Ascending aorta (tissue), 2 donors: ENCODE measurements at regions of chr2 and their contacts with region 1.

Region 1: DNA sequence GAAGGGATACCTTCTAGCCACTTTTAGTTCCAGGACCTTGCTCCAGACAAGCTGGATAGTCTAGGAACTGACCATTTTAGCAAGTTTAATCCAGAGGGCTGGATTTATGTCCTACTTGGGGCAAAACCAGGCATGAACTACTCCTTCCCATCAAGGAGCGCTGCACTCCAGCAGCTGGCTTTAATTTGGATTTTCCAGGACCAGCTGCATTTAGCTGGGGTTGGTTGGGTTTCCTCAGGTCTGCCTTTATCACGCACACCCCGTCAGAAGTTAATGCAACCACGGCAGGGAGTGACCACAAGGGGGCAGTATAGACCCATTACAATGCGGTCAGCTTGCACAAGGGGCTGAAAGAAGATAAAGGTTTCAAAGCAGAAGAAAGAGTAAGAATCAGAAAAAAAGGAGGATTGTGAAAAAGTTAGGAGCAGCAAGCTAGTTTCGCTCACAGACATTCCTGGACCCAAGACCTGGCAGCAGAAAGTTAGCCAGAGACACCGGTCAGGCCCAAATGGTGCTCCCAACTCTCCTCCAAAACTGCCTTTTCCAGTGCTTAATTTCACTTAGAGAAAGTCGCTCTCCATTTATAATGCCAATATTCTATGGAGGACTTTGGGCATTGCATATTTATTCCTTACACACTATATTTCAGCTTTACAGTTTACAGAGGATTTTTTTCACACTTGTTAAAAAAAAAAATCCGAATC is 40.1 kb downstream of the SLC4A1AP start:
- DNase-seq: peak; percentile 61 to 95
- H3K4me3 ChIP-seq: no peak overlapping the region
- H3K27ac ChIP-seq: peak overlapping the region; percentile 95 to 97
- H3K4me1 ChIP-seq: peaks cover 28 to 30% of the 10 kb centered on the region in 2 donors
- H3K27me3 ChIP-seq: no peaks in the 10 kb centered on the region
- CTCF ChIP-seq: peak; percentile 85 to 95 (median 90)

Region 2: DNA sequence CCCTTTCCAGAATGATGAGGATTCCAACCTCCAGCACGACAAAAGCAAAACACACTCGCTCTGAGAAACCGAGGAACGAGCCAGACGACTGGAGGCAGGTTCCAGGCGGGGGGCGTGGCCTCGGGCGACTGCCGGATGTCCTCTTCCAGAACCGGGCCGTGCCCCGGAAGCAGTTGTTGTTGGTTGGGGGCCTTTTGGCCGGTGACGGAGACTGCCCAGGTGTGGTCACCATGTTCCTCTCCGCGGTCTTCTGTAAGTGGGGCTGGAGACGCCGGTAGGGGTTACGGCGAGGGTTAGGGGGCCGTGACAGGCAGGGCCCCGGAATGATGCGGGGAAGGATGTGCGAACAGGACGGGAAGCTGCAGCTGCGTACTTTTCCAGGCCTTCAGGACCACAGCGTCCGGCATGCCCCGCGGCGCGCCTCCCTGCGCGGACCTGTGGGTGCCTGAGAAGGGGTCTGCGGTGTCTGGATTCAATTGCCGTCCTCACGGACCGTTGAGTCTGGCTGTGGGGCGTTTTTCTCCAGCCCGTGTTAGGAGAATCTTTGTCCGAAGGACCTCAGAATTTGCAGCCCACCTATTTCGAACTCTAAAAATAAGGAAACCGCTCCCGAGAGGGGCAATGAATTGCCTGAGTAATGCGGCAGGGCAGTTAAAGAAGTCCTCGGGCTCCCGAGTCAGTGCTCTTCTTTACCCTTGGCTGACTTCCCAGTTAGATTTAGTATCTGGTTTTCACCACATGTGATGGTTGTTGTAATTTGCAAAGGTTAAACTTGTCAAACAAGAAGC is 68.0 kb after region 1 on chr2 and contains the start of gene MRPL33:
- intact Hi-C with region 1: loop called (anchors 1 kb)
- DNase-seq: peak; percentile 83 to 97
- H3K4me3 ChIP-seq: peak within 1 kb of the TSS; percentile 80 to 92
- H3K27ac ChIP-seq: peak within 1 kb of the TSS; percentile 90 to 96
- H3K4me1 ChIP-seq: peaks cover 9 to 22% of the 10 kb centered on the region in 2 donors
- H3K27me3 ChIP-seq: no peaks in the 10 kb centered on the region
- CTCF ChIP-seq: no peak
- total RNA-seq, gene MRPL33: 3.4 TPM

Region 3: GRCh38 chr2:27890146-27890923 is 186.5 kb after region 1 on chr2 and contains the starts of genes BABAM2 and RBKS:
- intact Hi-C with region 1: loop called (anchors 2 kb)
- DNase-seq: peak; percentile 75 to 91
- H3K4me3 ChIP-seq: peak within 1 kb of the TSS; percentile 69 to 72
- H3K27ac ChIP-seq: peak within 1 kb of the TSS; percentile 90 to 95
- H3K4me1 ChIP-seq: peaks cover 0 to 21% of the 10 kb centered on the region in 2 donors
- H3K27me3 ChIP-seq: no peaks in the 10 kb centered on the region
- CTCF ChIP-seq: no peak
- total RNA-seq, gene BABAM2: 19.6 TPM
- total RNA-seq, gene RBKS: not detected

Region 4: GRCh38 chr2:28233164-28233676 is 529.4 kb after region 1 on chr2:
- intact Hi-C with region 1: loop called (anchors 5 kb)
- DNase-seq: no peak
- H3K4me3 ChIP-seq: no peak overlapping the region
- H3K27ac ChIP-seq: peak overlapping the region; percentile 29 to 35
- H3K4me1 ChIP-seq: peaks cover 7 to 19% of the 10 kb centered on the region in 2 donors
- H3K27me3 ChIP-seq: no peaks in the 10 kb centered on the region
- CTCF ChIP-seq: no peak

Region 5: GRCh38 chr2:28392297-28393113 is 688.7 kb after region 1 on chr2 and contains the start of gene FOSL2:
- intact Hi-C with region 1: loop called (anchors 1 kb)
- DNase-seq: peak; percentile 94 to 99
- H3K4me3 ChIP-seq: peak within 1 kb of the TSS; percentile 81 to 96
- H3K27ac ChIP-seq: peak within 1 kb of the TSS; percentile 99 to 100
- H3K4me1 ChIP-seq: peaks cover 0 to 12% of the 10 kb centered on the region in 2 donors
- H3K27me3 ChIP-seq: no peaks in the 10 kb centered on the region
- CTCF ChIP-seq: no peak
- total RNA-seq, gene FOSL2: 185 TPM